Dorsolateral prefrontal cortex (tissue), 120 donors: ENCODE measurements at regions of chr3 and their contacts with region 1.

Region 1: GRCh38 chr3:69803681-69804270 is 64.5 kb downstream of the MITF start:
- DNase-seq: no peak
- H3K4me3 ChIP-seq: no peak overlapping the region
- H3K27ac ChIP-seq: no peak overlapping the region
- H3K27me3 ChIP-seq: no peaks in the 10 kb centered on the region
- CTCF ChIP-seq: no peak

Region 2: GRCh38 chr3:69848113-69848512 is 44.3 kb after region 1 on chr3:
- intact Hi-C with region 1: loop called in 1 of 2 experiments (anchors 5 kb)
- DNase-seq: no peak
- H3K4me3 ChIP-seq: peak overlapping the region in 1 of 59 donors; percentile 1
- H3K27ac ChIP-seq: peak overlapping the region in 15 of 59 donors; percentile 3 to 50 (median 19)
- H3K27me3 ChIP-seq: no peaks in the 10 kb centered on the region
- CTCF ChIP-seq: no peak